Endothelial cell of umbilical vein (primary cell): ENCODE measurements at regions of chr18 and their contacts with region 1.

Region 1: DNA sequence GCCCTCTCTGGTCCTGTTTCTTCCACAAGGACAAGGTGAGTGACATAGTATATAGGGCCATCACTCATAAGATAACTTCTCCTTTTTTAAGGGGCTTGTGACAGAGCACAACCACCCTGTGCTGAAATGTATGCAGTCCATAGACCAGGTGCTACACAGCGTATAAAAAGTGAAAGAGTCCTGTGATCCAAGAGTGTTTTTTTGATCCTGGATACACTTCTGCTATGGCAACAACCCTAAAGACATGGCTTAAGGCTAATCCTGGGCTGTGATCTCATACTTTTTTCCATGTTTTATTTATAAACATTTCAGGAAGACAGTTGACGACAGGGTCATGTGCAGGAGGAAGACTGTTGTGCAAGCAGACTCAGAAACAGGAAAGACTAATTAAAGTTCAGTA is 400.5 kb upstream of the TCF4 start:
- DNase-seq: peak; percentile 94
- H3K4me3 ChIP-seq: no peak overlapping the region
- H3K27ac ChIP-seq: peak overlapping the region; percentile 81
- H3K4me1 ChIP-seq: peaks cover 10% of the 10 kb centered on the region
- H3K27me3 ChIP-seq: no peaks in the 10 kb centered on the region
- CTCF ChIP-seq: no peak
- POLR2A ChIP-seq: no peak

Region 2: GRCh38 chr18:55322178-55322735 is 666.3 kb before region 1 on chr18:
- CTCF ChIA-PET with region 1: no interaction called
- POLR2A ChIA-PET with region 1: no interaction called
- dilution Hi-C with region 1: no loop called
- intact Hi-C with region 1: loop called (anchors 10 kb)
- DNase-seq: peak; percentile 96
- H3K4me3 ChIP-seq: peak overlapping the region; percentile 28 to 89 (median 52)
- H3K27ac ChIP-seq: peak overlapping the region; percentile 82
- H3K4me1 ChIP-seq: peaks cover 66% of the 10 kb centered on the region
- H3K27me3 ChIP-seq: no peaks in the 10 kb centered on the region
- CTCF ChIP-seq: peak; percentile 4 to 20
- POLR2A ChIP-seq: no peak

Region 3: GRCh38 chr18:55790296-55790695 is 198.2 kb before region 1 on chr18:
- CTCF ChIA-PET with region 1: no interaction called
- POLR2A ChIA-PET with region 1: no interaction called
- dilution Hi-C with region 1: no loop called
- intact Hi-C with region 1: loop called (anchors 1 kb)
- DNase-seq: peak; percentile 84
- H3K4me3 ChIP-seq: no peak overlapping the region
- H3K27ac ChIP-seq: peak overlapping the region; percentile 81
- H3K4me1 ChIP-seq: peaks cover 19% of the 10 kb centered on the region
- H3K27me3 ChIP-seq: no peaks in the 10 kb centered on the region
- CTCF ChIP-seq: no peak
- POLR2A ChIP-seq: no peak

Region 4: DNA sequence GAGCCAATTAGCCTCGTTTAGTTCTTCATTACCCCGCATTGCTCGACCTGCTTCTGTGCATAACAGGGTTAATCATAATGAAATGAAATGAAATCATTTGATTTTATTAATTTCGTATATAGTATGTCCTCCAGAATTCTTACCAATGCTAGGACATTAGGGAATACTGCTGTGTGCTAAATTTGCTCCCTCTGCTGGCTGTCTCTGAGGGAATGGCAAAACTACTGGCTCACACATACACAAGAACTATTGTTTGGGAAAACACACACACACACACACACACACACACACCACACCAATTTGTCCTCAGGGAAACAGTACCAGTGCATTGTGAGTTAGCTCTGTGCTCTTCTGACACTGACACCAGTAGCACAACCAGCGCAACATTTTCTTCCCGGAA is 127.3 kb before region 1 on chr18:
- CTCF ChIA-PET with region 1: no interaction called
- POLR2A ChIA-PET with region 1: no interaction called
- dilution Hi-C with region 1: no loop called
- intact Hi-C with region 1: loop called (anchors 10 kb)
- DNase-seq: peak; percentile 65
- H3K4me3 ChIP-seq: no peak overlapping the region
- H3K27ac ChIP-seq: no peak overlapping the region
- H3K4me1 ChIP-seq: peaks cover 5% of the 10 kb centered on the region
- H3K27me3 ChIP-seq: no peaks in the 10 kb centered on the region
- CTCF ChIP-seq: peak; percentile 41 to 44
- POLR2A ChIP-seq: no peak

Region 5: GRCh38 chr18:56021136-56021808 is 32.7 kb after region 1 on chr18:
- CTCF ChIA-PET with region 1: no interaction called
- POLR2A ChIA-PET with region 1: no interaction called
- dilution Hi-C with region 1: no loop called
- intact Hi-C with region 1: loop called (anchors 1 kb)
- DNase-seq: peak; percentile 86
- H3K4me3 ChIP-seq: peak overlapping the region in 1 of 3 experiments; percentile 3
- H3K27ac ChIP-seq: peak overlapping the region; percentile 93
- H3K4me1 ChIP-seq: peaks cover 35% of the 10 kb centered on the region
- H3K27me3 ChIP-seq: no peaks in the 10 kb centered on the region
- CTCF ChIP-seq: no peak
- POLR2A ChIP-seq: no peak